ENCODE measurements at regions of chr10 and their contacts with region 1.

Region 1: DNA sequence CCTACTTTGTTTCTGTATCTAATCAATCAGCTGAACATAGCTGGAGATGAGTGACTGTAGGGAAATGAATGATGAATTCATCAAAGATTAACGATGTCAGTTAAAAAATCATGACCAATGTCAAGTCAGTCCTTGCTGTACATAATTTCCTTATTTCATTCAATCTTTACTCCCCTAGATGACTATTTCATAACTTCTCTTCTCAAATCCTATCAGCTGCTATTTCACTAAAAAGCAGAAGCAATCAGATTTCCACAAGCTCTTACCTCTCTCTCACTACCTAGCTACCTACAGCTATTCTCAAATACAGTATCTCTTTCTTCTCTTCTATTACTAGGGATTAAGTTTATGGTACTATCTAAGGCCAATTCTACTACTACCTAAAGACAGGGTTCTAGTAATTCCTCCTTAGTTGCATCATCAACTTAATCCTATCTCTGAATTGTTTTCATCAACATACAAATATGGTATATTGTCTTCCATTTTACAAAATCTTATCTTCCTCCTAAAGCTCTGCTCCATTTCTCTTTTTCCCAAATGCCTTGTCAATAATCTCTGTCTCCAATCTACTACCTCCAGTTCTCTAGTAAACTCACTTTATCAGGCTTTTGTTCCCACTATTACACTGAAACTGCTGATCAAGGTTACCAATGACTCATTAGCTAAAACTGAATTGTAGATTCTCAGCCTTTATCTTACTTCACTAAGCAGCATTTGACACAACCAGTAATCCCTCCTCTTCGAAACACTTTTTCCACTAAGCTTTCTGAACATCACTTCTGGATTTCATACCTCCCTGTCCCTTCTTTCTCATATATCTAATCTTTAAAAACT is 28.4 kb downstream of the JMJD1C start:
- DNase-seq: no peak
- ATAC-seq: no peak
- H3K4me3 ChIP-seq: no peak overlapping the region
- H3K4me3 Mint-ChIP-seq: no peak overlapping the region
- H3K27ac ChIP-seq: no peak overlapping the region
- H3K27ac Mint-ChIP-seq: no peak overlapping the region
- H3K4me1 ChIP-seq: peaks cover 0 to 8% of the 10 kb centered on the region in 2 donors
- H3K4me1 Mint-ChIP-seq: peaks cover 13 to 32% (median 26%) of the 10 kb centered on the region in 7 donors
- H3K27me3 ChIP-seq: no peaks in the 10 kb centered on the region
- H3K27me3 Mint-ChIP-seq: no peaks in the 10 kb centered on the region

Region 2: GRCh38 chr10:63409465-63410027 is 27.8 kb before region 1 on chr10:
- CTCF ChIA-PET with region 1: no interaction called
- POLR2A ChIA-PET with region 1: no interaction called
- intact Hi-C with region 1: loop called in 1 of 2 experiments (anchors 5 kb)
- DNase-seq: no peak
- ATAC-seq: no peak
- H3K4me3 ChIP-seq: no peak overlapping the region
- H3K4me3 Mint-ChIP-seq: no peak overlapping the region
- H3K27ac ChIP-seq: no peak overlapping the region
- H3K27ac Mint-ChIP-seq: peak overlapping the region in 1 of 9 donors; percentile 15
- H3K4me1 ChIP-seq: peaks cover 0 to 4% of the 10 kb centered on the region in 2 donors
- H3K4me1 Mint-ChIP-seq: peaks cover 7 to 45% (median 33%) of the 10 kb centered on the region in 7 donors
- H3K27me3 ChIP-seq: no peaks in the 10 kb centered on the region
- H3K27me3 Mint-ChIP-seq: no peaks in the 10 kb centered on the region

Region 3: GRCh38 chr10:63456437-63457210 is 19.3 kb after region 1 on chr10:
- CTCF ChIA-PET with region 1: no interaction called
- POLR2A ChIA-PET with region 1: no interaction called
- intact Hi-C with region 1: loop called in 1 of 2 experiments (anchors 2 kb)
- DNase-seq: no peak
- ATAC-seq: no peak
- H3K4me3 ChIP-seq: no peak overlapping the region
- H3K4me3 Mint-ChIP-seq: no peak overlapping the region
- H3K27ac ChIP-seq: no peak overlapping the region
- H3K27ac Mint-ChIP-seq: peak overlapping the region in 2 of 9 donors; percentile 9 to 43
- H3K4me1 ChIP-seq: no peaks in the 10 kb centered on the region
- H3K4me1 Mint-ChIP-seq: peaks cover 0 to 46% (median 16%) of the 10 kb centered on the region in 7 donors
- H3K27me3 ChIP-seq: no peaks in the 10 kb centered on the region
- H3K27me3 Mint-ChIP-seq: no peaks in the 10 kb centered on the region